Right cardiac atrium (tissue), 5 donors: ENCODE measurements at regions of chr22 and their contacts with region 1.

Region 1: GRCh38 chr22:30289134-30289979 is at the start of gene CASTOR1:
- DNase-seq: peak; percentile 99 to 100 (median 99)
- ATAC-seq: peak; percentile 87 to 91
- H3K4me3 ChIP-seq: peak within 1 kb of the TSS; percentile 75
- H3K27ac ChIP-seq: peak within 1 kb of the TSS; percentile 97
- H3K4me1 ChIP-seq: peaks cover 14% of the 10 kb centered on the region
- H3K27me3 ChIP-seq: no peaks in the 10 kb centered on the region
- total RNA-seq, gene CASTOR1: 7.0 to 9.0 (median 7.4) TPM

Region 2: GRCh38 chr22:29245637-29246385 is 1043.5 kb before region 1 on chr22:
- intact Hi-C with region 1: no loop called
- DNase-seq: peak; percentile 64 to 86 (median 83)
- ATAC-seq: peak; percentile 81 to 87
- H3K4me3 ChIP-seq: no peak overlapping the region
- H3K27ac ChIP-seq: no peak overlapping the region
- H3K4me1 ChIP-seq: no peaks in the 10 kb centered on the region
- H3K27me3 ChIP-seq: no peaks in the 10 kb centered on the region

Region 3: DNA sequence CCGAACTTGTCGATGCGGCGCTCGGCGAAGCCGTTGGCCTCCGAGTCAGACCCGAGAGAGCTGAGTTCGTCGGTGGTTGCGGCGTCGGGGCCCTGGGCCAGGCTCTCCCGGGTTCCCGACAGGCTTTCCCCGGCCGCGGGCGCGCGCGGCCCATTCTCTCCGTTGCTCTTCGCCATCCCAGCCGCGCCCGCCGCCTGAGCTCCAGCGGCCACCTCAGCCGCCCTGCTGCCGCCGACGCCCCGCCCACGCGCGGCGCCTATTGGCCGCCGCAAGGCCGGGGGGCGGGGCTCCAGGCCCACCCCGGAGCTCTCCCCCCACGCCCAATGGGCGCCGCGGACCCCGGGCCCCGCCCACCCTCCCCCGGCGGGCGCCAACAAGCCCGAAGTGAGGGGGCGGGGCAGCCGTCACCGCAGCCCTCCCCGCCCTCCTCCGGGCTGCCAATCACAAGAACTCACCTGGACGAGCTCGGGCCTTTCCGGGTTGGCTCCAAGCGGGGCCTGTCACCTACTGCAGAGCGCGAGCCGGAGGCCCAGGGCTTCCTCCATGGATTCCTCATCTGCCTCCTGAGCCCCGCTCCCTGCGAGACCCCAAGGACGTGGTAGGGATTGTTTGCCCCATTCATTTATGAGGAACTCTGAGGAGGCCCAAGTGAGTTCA is 37.5 kb after region 1 on chr22 and contains the start of gene TBC1D10A:
- intact Hi-C with region 1: loop called in 2 of 4 experiments (anchors 5 kb)
- DNase-seq: peak; percentile 90 to 97 (median 96)
- ATAC-seq: peak; percentile 95 to 96
- H3K4me3 ChIP-seq: peak within 1 kb of the TSS; percentile 85
- H3K27ac ChIP-seq: peak within 1 kb of the TSS; percentile 78
- H3K4me1 ChIP-seq: peaks cover 9% of the 10 kb centered on the region
- H3K27me3 ChIP-seq: no peaks in the 10 kb centered on the region
- total RNA-seq, gene TBC1D10A: 5.6 to 9.1 (median 8.5) TPM

Region 4: DNA sequence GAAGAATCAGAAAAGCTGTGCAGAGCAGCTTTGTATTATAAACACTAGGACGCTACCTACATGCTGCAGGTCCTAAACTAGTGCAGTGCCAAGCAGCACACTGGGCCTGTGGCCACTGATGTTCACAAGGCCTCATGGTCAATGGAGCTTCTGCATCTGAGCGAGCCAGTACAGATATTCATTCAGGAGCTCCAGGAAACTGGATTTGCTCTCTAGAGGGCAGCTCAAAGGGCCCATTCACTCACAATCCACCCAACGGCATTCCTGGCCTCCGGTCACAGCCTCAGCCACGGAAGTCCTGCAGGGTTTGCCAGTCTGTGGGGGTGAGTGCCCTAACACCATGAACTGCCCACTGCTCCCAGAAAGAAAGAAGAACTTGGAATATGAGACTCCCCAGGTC is 43.2 kb after region 1 on chr22:
- intact Hi-C with region 1: loop called in 2 of 4 experiments (anchors 5 kb)
- DNase-seq: no peak
- ATAC-seq: no peak
- H3K4me3 ChIP-seq: no peak overlapping the region
- H3K27ac ChIP-seq: no peak overlapping the region
- H3K4me1 ChIP-seq: peaks cover 4% of the 10 kb centered on the region
- H3K27me3 ChIP-seq: no peaks in the 10 kb centered on the region

Region 5: DNA sequence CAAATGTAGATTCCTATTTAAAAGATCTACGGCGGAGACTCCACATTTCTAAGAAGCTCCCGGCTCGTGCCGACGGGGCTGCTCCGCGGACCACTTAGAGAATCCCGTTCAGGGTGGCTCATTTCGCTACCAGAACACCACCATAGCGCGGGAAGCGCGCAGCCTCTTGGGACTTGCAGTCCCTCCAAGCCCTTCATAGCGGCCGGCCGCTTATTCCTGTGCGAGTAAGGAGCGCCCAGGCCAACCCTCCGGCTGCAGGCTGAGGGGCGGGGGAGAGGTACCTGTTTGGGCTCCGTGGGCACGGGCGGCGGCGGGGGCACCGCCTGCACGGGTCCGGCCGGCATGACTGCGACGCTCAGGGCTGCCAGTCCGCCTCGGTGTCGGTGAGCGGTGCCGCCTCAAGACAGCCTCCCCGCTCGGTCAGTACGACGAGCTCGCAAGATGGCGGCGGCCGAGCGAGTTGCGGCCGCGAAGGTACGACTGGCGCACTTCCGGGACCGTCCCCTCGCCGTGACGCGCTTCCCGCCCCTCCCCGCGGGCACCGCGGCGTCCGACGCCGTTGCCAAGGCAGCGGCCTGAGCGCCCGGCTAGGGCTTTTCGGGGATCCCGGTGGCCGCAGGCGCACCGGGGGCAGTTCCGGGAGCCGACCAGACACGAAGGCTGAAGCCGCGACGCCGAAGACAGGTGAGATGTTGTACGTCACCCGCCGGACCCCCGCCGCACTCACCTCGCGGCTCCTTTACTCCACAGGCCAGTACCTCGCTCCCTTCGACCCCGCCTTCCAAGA is 67.3 kb after region 1 on chr22 and contains the starts of genes CCDC157 and SF3A1:
- intact Hi-C with region 1: loop called in 1 of 4 experiments (anchors 5 kb)
- DNase-seq: peak; percentile 90 to 96 (median 95)
- ATAC-seq: peak; percentile 99
- H3K4me3 ChIP-seq: peak within 1 kb of the TSS; percentile 71
- H3K27ac ChIP-seq: peak within 1 kb of the TSS; percentile 97
- H3K4me1 ChIP-seq: peaks cover 13% of the 10 kb centered on the region
- H3K27me3 ChIP-seq: no peaks in the 10 kb centered on the region
- total RNA-seq, gene CCDC157: 0.47 to 2.1 (median 1.4) TPM
- total RNA-seq, gene SF3A1: 105 to 110 (median 108) TPM

Region 6: DNA sequence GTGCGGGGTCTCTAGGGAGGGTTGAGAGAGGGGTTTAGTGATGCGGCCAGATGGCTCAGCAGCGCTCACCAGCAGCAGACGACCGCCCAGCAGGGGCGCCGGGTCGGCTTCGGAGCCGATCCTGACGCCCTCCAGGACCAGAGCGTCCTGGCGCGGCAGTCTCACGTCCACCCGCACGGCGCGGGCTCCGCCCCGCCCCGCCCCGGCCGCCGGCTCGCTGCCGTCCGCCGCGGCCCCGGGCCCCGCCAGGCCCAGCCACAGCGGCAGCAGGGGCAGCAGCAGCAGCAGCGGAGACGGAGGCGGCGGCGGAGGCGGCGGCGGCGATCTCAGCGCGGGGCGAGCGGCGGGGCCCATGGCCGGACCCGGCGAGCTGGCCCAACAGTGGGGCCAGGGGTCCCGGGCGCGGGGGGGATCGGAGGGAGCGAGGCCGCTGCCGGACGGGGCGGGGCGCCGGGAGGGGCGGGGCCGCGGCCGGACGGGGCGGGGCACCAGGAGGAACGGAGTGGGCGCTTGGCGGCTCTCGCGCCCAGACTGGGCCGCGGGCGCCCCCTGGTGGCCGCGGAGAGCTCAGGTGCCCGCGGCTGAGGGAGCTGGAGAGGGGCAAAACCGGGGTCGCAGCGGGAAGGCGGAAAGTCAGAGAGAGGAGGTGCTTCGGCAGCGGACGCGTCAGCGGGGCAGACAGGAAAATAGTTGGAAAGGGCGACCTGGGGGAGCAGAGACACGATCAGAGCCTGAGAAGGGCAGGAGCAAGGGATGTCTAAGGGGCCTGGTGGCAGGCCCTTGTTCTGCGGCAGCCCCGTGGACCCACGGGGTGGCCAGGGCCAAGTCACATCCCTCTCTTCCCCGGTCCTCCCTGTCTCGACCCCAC is 97.8 kb after region 1 on chr22 and contains the start of gene RNF215:
- intact Hi-C with region 1: loop called in 3 of 4 experiments (anchors 5 kb)
- DNase-seq: peak; percentile 81 to 95 (median 93)
- ATAC-seq: peak; percentile 90 to 94
- H3K4me3 ChIP-seq: peak within 1 kb of the TSS; percentile 85
- H3K27ac ChIP-seq: peak within 1 kb of the TSS; percentile 69
- H3K4me1 ChIP-seq: peaks cover 2% of the 10 kb centered on the region
- H3K27me3 ChIP-seq: no peaks in the 10 kb centered on the region
- total RNA-seq, gene RNF215: 8.7 to 17.0 (median 12.7) TPM